Activated naive CD4-positive, alpha-beta T cell treated with anti-CD3 and anti-CD28 coated beads for 36 hours (primary cell): ENCODE measurements at regions of chr10 and their contacts with region 1.

Region 1: GRCh38 chr10:97400665-97401454 is at the start of gene RRP12:
- DNase-seq: peak; percentile 92
- H3K4me3 Mint-ChIP-seq: peak within 1 kb of the TSS; percentile 92
- H3K27ac Mint-ChIP-seq: peak within 1 kb of the TSS; percentile 83
- H3K4me1 Mint-ChIP-seq: peaks cover 15% of the 10 kb centered on the region
- H3K27me3 Mint-ChIP-seq: no peaks in the 10 kb centered on the region
- total RNA-seq, gene RRP12: 51.0 to 55.2 TPM

Region 2: DNA sequence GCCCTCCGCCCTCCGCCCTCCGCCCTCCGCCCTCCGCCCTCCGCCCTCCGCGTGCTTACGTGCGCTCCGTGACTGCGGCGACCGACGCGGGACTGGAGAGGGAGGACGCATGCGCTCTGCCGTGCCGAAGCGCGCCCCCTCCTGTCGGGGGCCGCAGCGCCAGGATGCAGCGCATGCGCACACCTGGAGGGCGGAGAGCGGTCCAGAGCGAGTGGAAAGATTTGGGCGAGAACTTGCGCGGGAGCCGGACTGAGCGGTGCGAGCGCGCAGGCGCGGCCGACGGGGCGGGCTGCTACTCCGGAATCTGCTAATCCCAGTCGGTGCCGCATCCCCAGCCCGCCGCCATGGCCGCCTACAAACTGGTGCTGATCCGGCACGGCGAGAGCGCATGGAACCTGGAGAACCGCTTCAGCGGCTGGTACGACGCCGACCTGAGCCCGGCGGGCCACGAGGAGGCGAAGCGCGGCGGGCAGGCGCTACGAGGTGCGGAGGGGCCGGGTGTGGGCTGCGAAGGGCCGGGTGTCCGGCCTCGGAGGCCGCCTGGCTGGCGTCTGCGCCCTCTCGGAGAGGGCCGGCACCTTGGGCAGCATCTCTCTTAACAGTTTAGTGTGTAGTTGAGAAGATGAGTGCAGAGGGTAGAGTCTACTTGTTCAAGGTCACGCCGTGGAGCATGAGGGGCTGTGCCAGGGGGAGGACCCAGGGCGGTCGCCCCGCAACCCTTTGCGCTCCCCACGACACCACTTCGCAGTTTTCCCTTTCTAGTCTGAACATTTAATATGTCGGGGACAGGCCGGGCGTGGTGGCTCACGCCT is 25.3 kb after region 1 on chr10 and contains the start of gene PGAM1:
- CTCF ChIA-PET with region 1: interaction called, 90 read pairs
- intact Hi-C with region 1: loop called (anchors 1 kb)
- DNase-seq: peak; percentile 95
- H3K4me3 Mint-ChIP-seq: peak within 1 kb of the TSS; percentile 90
- H3K27ac Mint-ChIP-seq: peak within 1 kb of the TSS; percentile 98
- H3K4me1 Mint-ChIP-seq: peaks cover 50% of the 10 kb centered on the region
- H3K27me3 Mint-ChIP-seq: no peaks in the 10 kb centered on the region
- total RNA-seq, gene PGAM1: 1,371 to 1,393 TPM